ENCODE measurements at regions of chr5 and their contacts with region 1.

Region 1: DNA sequence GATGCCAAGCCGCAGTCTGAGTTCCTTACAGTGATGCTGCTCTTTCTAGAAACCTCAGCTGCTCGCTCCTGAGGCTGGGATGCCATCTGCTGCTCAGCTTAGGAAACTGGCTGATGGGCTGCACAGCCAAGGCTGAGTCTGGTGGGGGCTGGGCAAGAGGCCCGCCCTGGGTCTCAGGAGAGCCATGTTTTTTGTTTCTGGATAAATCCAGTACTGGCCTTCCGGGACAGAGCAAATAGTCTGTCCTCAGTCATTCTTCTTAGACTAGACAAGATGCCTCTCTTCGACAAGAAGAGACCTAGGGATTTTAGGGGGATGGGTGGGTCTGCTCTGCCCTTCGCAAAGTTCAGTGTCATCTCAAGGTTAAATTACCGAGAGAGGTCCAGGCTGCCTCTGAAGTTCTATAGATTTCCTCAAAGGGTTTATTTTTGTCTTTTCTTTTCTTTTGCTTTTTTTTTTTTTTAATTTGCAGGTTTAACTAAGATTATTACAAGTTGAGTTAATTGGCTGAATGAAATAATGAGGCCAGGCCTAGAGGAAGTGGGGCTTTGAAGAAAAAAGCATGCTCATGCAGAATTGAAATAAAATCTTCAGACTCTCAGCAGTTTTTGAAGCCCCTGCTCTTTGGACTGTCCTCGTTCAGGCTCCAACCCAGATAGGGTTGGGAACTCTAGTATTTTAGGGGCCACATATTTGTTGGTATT is 30.6 kb upstream of the MATR3 start:
- DNase-seq: peak; percentile 80 to 83
- ATAC-seq: peak; percentile 94 to 99
- H3K4me3 ChIP-seq: no peak overlapping the region
- H3K27ac ChIP-seq: peak overlapping the region in 3 of 4 donors; percentile 32 to 50 (median 42)
- H3K4me1 ChIP-seq: peaks cover 9 to 15% of the 10 kb centered on the region in 2 donors
- H3K27me3 ChIP-seq: no peaks in the 10 kb centered on the region
- CTCF ChIP-seq: peak; percentile 73 to 97 (median 88)
- POLR2A ChIP-seq: no peak

Region 2: DNA sequence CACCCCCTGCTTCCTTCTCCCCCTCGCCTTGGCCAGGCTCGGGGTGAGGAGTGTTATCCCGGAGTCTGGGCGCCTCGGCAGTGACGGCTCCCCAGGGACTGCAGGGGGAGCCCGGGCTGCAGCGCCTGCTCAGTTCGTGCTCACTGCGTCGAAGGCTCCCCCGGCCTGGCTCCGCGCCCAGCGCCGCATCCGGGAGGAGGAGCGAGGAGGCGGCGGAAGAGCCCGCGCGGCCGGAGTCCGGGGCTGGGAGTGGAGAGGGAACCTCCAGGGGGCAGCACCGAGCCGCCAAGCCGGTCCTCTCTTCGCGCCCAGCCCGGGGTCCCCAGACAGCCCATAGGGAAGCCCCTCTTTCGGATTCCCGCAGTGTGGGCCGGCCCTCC is 798.9 kb before region 1 on chr5:
- in situ Hi-C with region 1: no loop called
- intact Hi-C with region 1: loop called (anchors 10 kb)
- DNase-seq: peak; percentile 80 to 91
- ATAC-seq: peak; percentile 53 to 58
- H3K4me3 ChIP-seq: peak overlapping the region; percentile 78 to 98 (median 90)
- H3K27ac ChIP-seq: peak overlapping the region; percentile 94 to 99 (median 96)
- H3K4me1 ChIP-seq: peaks cover 14 to 22% of the 10 kb centered on the region in 2 donors
- H3K27me3 ChIP-seq: peaks cover 0 to 6% (median 0%) of the 10 kb centered on the region in 3 donors
- CTCF ChIP-seq: peak; percentile 95 to 99 (median 96)
- POLR2A ChIP-seq: peak in 1 of 2 donors; percentile 26

Region 3: DNA sequence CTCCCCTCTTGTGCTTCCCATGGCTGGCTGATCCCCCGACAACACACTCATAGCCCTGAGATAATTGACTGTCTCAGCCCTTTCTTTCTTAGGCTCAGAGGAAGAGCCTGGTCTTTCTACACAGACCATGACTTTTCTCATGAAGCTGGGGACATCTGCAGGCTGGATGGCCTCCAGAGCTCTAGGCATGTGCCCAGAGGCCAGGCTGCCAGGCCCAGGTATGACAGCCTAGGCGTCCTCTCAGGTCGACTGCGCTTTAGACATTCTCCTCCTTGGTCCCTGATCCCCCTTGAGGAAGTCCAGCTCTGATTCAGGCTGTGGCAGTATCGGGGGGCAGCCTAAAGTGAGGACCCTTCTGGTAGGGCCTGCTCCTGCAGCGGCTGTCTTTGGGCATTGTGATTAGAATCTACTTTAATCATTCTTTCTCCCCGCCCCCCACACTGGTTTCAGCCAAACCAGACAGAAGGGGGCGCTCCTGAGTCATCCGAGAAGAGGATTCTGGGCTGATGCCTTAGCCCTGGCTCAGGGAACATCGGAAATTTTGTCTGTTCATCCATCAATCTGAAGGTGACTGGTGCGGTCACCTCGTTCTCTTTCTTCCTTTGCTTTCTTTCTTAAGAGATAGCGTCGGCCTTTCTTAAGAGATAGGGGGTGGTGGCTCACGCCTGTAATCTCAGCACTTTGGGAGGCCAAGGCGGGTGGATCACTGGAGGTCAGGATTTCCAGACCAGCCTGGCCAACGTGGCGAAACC is 621.2 kb before region 1 on chr5:
- in situ Hi-C with region 1: loop called in 1 of 4 experiments (anchors 5 kb)
- intact Hi-C with region 1: loop called (anchors 1 kb)
- DNase-seq: peak; percentile 15 to 44
- ATAC-seq: peak; percentile 65 to 91
- H3K4me3 ChIP-seq: no peak overlapping the region
- H3K27ac ChIP-seq: no peak overlapping the region
- H3K4me1 ChIP-seq: no peaks in the 10 kb centered on the region
- H3K27me3 ChIP-seq: no peaks in the 10 kb centered on the region
- CTCF ChIP-seq: peak; percentile 43 to 66 (median 62)
- POLR2A ChIP-seq: no peak

Region 4: GRCh38 chr5:138752951-138753793 is 509.7 kb before region 1 on chr5 and contains the start of gene CTNNA1:
- in situ Hi-C with region 1: loop called in 1 of 4 experiments (anchors 10 kb)
- intact Hi-C with region 1: loop called (anchors 5 kb)
- DNase-seq: peak; percentile 66 to 80
- ATAC-seq: peak; percentile 85 to 87
- H3K4me3 ChIP-seq: peak within 1 kb of the TSS; percentile 75 to 94 (median 79)
- H3K27ac ChIP-seq: peak within 1 kb of the TSS; percentile 87 to 100 (median 96)
- H3K4me1 ChIP-seq: peaks cover 13 to 22% of the 10 kb centered on the region in 2 donors
- H3K27me3 ChIP-seq: no peaks in the 10 kb centered on the region
- CTCF ChIP-seq: peak in 1 of 5 experiments; percentile 11
- POLR2A ChIP-seq: peak; percentile 76 to 84
- total RNA-seq, gene CTNNA1: 92.6 to 164 (median 114) TPM

Region 5: GRCh38 chr5:138824924-138825863 is 437.7 kb before region 1 on chr5:
- in situ Hi-C with region 1: loop called in 2 of 4 experiments (anchors 5 to 10 kb)
- intact Hi-C with region 1: loop called (anchors 1 kb)
- DNase-seq: no peak
- ATAC-seq: peak in 1 of 2 donors; percentile 50
- H3K4me3 ChIP-seq: no peak overlapping the region
- H3K27ac ChIP-seq: peak overlapping the region in 1 of 4 donors; percentile 0
- H3K4me1 ChIP-seq: peaks cover 11 to 25% of the 10 kb centered on the region in 2 donors
- H3K27me3 ChIP-seq: no peaks in the 10 kb centered on the region
- CTCF ChIP-seq: peak in 4 of 5 experiments; percentile 27 to 63 (median 48)
- POLR2A ChIP-seq: no peak

Region 6: DNA sequence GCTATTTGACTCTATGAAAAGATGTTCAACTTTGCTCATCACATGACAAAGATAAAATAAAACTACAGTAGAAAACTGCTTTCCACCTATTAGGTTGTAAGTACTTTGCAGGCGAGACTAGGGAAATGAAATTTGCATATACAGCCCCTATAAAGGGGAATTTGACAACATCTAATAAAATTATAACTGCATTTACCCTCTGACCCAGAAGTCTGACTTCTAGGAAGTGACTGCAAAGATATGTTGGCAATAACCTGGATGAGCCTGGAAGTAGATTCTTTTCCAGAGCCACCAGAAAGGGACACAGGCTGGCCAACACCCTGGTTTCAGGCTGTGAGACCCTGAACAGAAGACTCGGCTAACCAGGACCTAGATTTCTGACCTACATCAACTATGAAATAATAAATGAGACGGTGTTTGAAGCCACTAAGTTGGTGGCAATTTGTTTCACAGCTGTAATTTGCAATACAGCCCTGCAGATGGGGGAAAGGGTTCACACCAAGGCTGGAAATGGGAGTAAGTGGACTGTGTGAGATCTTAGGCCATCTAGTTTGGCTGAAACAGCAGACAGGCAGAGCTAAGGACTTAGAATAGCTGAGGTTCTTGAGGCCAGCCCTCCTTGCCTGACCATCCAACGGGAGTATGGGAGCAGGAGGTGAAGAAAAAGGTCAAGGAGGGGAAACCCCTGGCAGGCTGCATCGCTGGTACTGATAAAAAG is 171.3 kb before region 1 on chr5:
- in situ Hi-C with region 1: no loop called
- intact Hi-C with region 1: loop called (anchors 2 kb)
- DNase-seq: no peak
- ATAC-seq: peak; percentile 80 to 82
- H3K4me3 ChIP-seq: no peak overlapping the region
- H3K27ac ChIP-seq: peak overlapping the region in 1 of 4 donors; percentile 12
- H3K4me1 ChIP-seq: peaks cover 22 to 35% of the 10 kb centered on the region in 2 donors
- H3K27me3 ChIP-seq: no peaks in the 10 kb centered on the region
- CTCF ChIP-seq: peak in 3 of 5 experiments; percentile 26 to 42 (median 31)
- POLR2A ChIP-seq: no peak

Region 7: GRCh38 chr5:139341650-139342422 is 78.9 kb after region 1 on chr5 and contains the start of gene PAIP2:
- in situ Hi-C with region 1: no loop called
- intact Hi-C with region 1: no loop called
- DNase-seq: peak; percentile 94 to 96
- ATAC-seq: peak; percentile 92 to 95
- H3K4me3 ChIP-seq: peak within 1 kb of the TSS; percentile 89 to 98 (median 92)
- H3K27ac ChIP-seq: peak within 1 kb of the TSS; percentile 96 to 100 (median 98)
- H3K4me1 ChIP-seq: peaks cover 21 to 36% of the 10 kb centered on the region in 2 donors
- H3K27me3 ChIP-seq: no peaks in the 10 kb centered on the region
- CTCF ChIP-seq: peak; percentile 57 to 86 (median 80)
- POLR2A ChIP-seq: peak; percentile 92 to 96
- total RNA-seq, gene PAIP2: 111 to 148 (median 126) TPM

Measured in gastrocnemius medialis (tissue), 4 donors.